Endothelial cell of umbilical vein (primary cell): ENCODE measurements at regions of chr1 and their contacts with region 1.

Region 1: DNA sequence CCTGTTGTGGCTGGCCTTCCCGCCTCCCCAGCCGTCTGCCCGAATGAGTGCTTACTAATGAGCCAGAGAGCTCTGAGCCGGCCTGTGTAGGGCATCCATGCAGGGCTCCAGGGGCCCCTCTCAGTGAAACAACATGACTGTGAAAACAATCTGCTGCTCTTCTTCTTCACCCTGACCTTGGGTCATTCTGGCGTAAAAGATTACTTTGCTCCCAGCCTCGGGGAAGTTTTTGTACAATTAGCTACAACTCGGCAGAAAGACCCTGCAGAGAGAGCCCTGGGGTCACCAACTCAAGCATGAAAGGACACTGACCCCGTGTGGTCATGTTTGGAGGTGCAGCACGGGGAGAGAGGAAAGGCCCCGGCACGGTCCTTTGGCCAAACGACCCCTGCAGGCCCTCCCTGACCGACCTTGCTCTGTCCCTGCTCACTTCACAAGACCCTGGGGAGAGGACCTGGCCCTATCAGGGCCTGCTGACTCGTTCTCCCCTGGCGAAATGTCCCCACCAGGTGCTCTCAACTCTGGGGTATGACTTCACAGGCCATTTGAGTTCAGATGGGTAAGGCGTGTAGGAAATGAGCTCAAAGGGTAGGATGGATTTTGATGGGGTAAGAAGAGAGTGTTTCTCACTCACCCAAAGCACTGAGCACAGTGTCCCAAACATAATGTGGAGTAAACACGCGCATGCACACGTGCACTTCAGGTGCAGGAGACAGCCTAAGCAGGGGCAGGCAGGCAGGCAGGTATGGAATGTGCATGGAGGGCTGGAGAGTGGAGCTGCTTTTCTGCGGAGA is 22.9 kb upstream of the FAM20B start:
- DNase-seq: peak; percentile 63
- H3K4me3 ChIP-seq: no peak overlapping the region
- H3K27ac ChIP-seq: no peak overlapping the region
- H3K4me1 ChIP-seq: no peaks in the 10 kb centered on the region
- H3K27me3 ChIP-seq: no peaks in the 10 kb centered on the region
- CTCF ChIP-seq: peak; percentile 93 to 96
- POLR2A ChIP-seq: no peak

Region 2: GRCh38 chr1:177741476-177741875 is 1261.3 kb before region 1 on chr1:
- CTCF ChIA-PET with region 1: no interaction called
- POLR2A ChIA-PET with region 1: no interaction called
- dilution Hi-C with region 1: no loop called
- intact Hi-C with region 1: no loop called
- DNase-seq: no peak
- H3K4me3 ChIP-seq: no peak overlapping the region
- H3K27ac ChIP-seq: no peak overlapping the region
- H3K4me1 ChIP-seq: no peaks in the 10 kb centered on the region
- H3K27me3 ChIP-seq: no peaks in the 10 kb centered on the region
- CTCF ChIP-seq: no peak
- POLR2A ChIP-seq: no peak

Region 3: DNA sequence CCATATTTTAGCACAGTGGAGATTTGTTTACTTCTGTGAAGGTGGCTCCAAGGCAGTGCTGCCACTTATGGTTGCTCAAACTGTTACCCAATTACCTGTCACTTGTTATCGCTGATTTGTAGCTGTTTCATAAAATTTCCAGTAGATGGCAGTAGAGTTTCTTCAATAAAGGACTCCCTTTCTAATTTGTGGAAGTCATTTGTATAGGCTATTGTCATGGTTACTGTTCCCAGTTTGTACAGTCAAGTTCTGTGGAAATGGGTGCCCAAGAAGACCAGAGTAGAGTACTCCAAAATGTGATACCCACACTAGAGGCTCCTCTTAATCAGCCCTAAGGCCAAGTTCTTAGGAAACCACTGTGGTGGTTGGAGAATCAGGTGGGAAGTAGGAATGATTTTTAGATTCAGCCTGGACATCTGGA is 692.1 kb before region 1 on chr1:
- CTCF ChIA-PET with region 1: interaction called, 23 read pairs
- POLR2A ChIA-PET with region 1: no interaction called
- dilution Hi-C with region 1: no loop called
- intact Hi-C with region 1: loop called (anchors 2 kb)
- DNase-seq: peak; percentile 70
- H3K4me3 ChIP-seq: no peak overlapping the region
- H3K27ac ChIP-seq: no peak overlapping the region
- H3K4me1 ChIP-seq: no peaks in the 10 kb centered on the region
- H3K27me3 ChIP-seq: no peaks in the 10 kb centered on the region
- CTCF ChIP-seq: peak; percentile 50 to 56
- POLR2A ChIP-seq: no peak

Region 4: GRCh38 chr1:178542560-178543356 is 460.0 kb before region 1 on chr1:
- CTCF ChIA-PET with region 1: interaction called, 349 read pairs
- POLR2A ChIA-PET with region 1: no interaction called
- dilution Hi-C with region 1: no loop called
- intact Hi-C with region 1: loop called (anchors 1 kb)
- DNase-seq: peak; percentile 89
- H3K4me3 ChIP-seq: peak overlapping the region; percentile 48 to 77 (median 53)
- H3K27ac ChIP-seq: no peak overlapping the region
- H3K4me1 ChIP-seq: peaks cover 11% of the 10 kb centered on the region
- H3K27me3 ChIP-seq: no peaks in the 10 kb centered on the region
- CTCF ChIP-seq: peak; percentile 83 to 89
- POLR2A ChIP-seq: no peak

Region 5: DNA sequence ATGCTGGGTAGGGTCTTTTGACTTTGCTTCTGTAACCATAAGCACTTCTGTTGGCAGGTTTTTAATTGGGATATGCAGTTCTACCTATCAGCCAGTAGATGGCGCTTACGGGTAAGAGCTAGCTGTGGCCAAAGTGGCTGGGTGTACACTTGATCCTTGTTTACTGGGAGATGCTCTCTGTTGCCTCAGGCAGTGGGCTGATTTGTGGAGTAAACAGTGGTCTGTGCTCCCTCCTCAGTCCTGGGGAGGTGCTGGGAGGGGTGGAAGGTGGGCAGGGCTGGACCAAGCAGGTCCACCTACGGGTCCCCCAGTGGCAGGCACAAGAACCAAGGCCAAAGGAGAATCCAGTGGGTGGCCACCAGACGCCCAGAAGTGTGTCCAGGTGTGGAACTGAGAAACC is 234.3 kb before region 1 on chr1:
- CTCF ChIA-PET with region 1: interaction called, 182 read pairs
- POLR2A ChIA-PET with region 1: interaction called, 9 read pairs
- dilution Hi-C with region 1: loop called (anchors 25 kb)
- intact Hi-C with region 1: loop called (anchors 1 kb)
- DNase-seq: no peak
- H3K4me3 ChIP-seq: no peak overlapping the region
- H3K27ac ChIP-seq: no peak overlapping the region
- H3K4me1 ChIP-seq: no peaks in the 10 kb centered on the region
- H3K27me3 ChIP-seq: no peaks in the 10 kb centered on the region
- CTCF ChIP-seq: peak; percentile 73 to 78
- POLR2A ChIP-seq: no peak

Region 6: DNA sequence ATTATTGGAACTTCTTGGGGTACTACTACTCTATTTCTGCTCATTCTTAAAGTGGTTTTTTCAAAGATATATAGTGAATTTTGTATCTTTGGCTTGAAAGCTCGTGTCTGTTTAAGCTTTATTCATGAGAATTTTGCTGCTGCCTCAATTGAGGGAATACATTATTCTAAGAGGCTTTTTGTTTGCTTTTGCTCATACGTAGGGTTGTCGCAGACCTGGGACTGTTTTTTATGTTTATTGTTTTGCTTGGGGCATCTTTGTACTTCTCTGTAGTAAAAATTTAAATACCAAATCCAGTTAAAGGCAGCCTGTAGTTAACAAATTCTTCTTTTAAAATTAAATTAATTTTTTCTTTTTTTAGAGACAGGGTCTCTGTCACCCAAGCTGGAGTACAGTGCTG is 194.2 kb before region 1 on chr1:
- CTCF ChIA-PET with region 1: interaction called, 9 read pairs
- POLR2A ChIA-PET with region 1: no interaction called
- dilution Hi-C with region 1: no loop called
- intact Hi-C with region 1: loop called (anchors 1 kb)
- DNase-seq: no peak
- H3K4me3 ChIP-seq: no peak overlapping the region
- H3K27ac ChIP-seq: no peak overlapping the region
- H3K4me1 ChIP-seq: no peaks in the 10 kb centered on the region
- H3K27me3 ChIP-seq: no peaks in the 10 kb centered on the region
- CTCF ChIP-seq: no peak
- POLR2A ChIP-seq: no peak

Region 7: DNA sequence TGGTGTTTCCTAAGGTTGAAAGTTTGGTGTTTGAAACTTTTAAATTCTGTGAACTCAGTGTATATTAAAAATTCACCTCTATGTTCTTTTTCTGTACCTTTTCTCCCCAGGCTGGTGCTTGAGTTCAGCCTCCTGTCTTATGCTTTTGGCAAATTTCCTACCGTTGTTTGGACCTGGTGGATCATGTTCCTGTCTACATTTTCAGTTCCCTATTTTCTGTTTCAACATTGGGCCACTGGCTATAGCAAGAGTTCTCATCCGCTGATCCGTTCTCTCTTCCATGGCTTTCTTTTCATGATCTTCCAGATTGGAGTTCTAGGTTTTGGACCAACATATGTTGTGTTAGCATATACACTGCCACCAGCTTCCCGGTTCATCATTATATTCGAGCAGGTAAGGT is 338.2 kb after region 1 on chr1:
- CTCF ChIA-PET with region 1: no interaction called
- POLR2A ChIA-PET with region 1: no interaction called
- dilution Hi-C with region 1: no loop called
- intact Hi-C with region 1: no loop called
- DNase-seq: no peak
- H3K4me3 ChIP-seq: no peak overlapping the region
- H3K27ac ChIP-seq: no peak overlapping the region
- H3K4me1 ChIP-seq: no peaks in the 10 kb centered on the region
- H3K27me3 ChIP-seq: no peaks in the 10 kb centered on the region
- CTCF ChIP-seq: no peak
- POLR2A ChIP-seq: no peak

Region 8: GRCh38 chr1:179365320-179366092 is 362.8 kb after region 1 on chr1 and contains the start of gene AXDND1:
- CTCF ChIA-PET with region 1: interaction called, 4 read pairs
- POLR2A ChIA-PET with region 1: no interaction called
- dilution Hi-C with region 1: no loop called
- intact Hi-C with region 1: loop called (anchors 2 kb)
- DNase-seq: peak; percentile 86
- H3K4me3 ChIP-seq: peak within 1 kb of the TSS; percentile 79 to 85 (median 80)
- H3K27ac ChIP-seq: peak within 1 kb of the TSS; percentile 97
- H3K4me1 ChIP-seq: peaks cover 4% of the 10 kb centered on the region
- H3K27me3 ChIP-seq: peaks cover 0 to 1% of the 10 kb centered on the region in 2 experiments
- CTCF ChIP-seq: no peak
- POLR2A ChIP-seq: peak; percentile 32
- total RNA-seq, gene AXDND1: 0.67 TPM in 1 of 2 replicates, not detected in the other

Region 9: GRCh38 chr1:180188091-180188506 is 1185.3 kb after region 1 on chr1:
- CTCF ChIA-PET with region 1: no interaction called
- POLR2A ChIA-PET with region 1: no interaction called
- dilution Hi-C with region 1: no loop called
- intact Hi-C with region 1: no loop called
- DNase-seq: peak; percentile 44
- H3K4me3 ChIP-seq: no peak overlapping the region
- H3K27ac ChIP-seq: no peak overlapping the region
- H3K4me1 ChIP-seq: no peaks in the 10 kb centered on the region
- H3K27me3 ChIP-seq: no peaks in the 10 kb centered on the region
- CTCF ChIP-seq: peak; percentile 67 to 80
- POLR2A ChIP-seq: no peak